ENCODE measurements at regions of chr12 and their contacts with region 1.

Region 1: GRCh38 chr12:6278439-6279255 is 31.8 kb upstream of the PLEKHG6 start:
- DNase-seq: peak; percentile 88 to 93
- ATAC-seq: peak; percentile 92 to 97 (median 95)
- H3K4me3 ChIP-seq: peak overlapping the region; percentile 71
- H3K27ac ChIP-seq: peak overlapping the region; percentile 90
- H3K4me1 ChIP-seq: peaks cover 13% of the 10 kb centered on the region
- H3K27me3 ChIP-seq: no peaks in the 10 kb centered on the region
- CTCF ChIP-seq: peak; percentile 99

Region 2: GRCh38 chr12:5988659-5989116 is 290.0 kb before region 1 on chr12:
- intact Hi-C with region 1: loop called (anchors 5 kb)
- DNase-seq: peak; percentile 76 to 84
- ATAC-seq: peak; percentile 85 to 96 (median 93)
- H3K4me3 ChIP-seq: no peak overlapping the region
- H3K27ac ChIP-seq: no peak overlapping the region
- H3K4me1 ChIP-seq: no peaks in the 10 kb centered on the region
- H3K27me3 ChIP-seq: no peaks in the 10 kb centered on the region
- CTCF ChIP-seq: peak; percentile 94

Region 3: DNA sequence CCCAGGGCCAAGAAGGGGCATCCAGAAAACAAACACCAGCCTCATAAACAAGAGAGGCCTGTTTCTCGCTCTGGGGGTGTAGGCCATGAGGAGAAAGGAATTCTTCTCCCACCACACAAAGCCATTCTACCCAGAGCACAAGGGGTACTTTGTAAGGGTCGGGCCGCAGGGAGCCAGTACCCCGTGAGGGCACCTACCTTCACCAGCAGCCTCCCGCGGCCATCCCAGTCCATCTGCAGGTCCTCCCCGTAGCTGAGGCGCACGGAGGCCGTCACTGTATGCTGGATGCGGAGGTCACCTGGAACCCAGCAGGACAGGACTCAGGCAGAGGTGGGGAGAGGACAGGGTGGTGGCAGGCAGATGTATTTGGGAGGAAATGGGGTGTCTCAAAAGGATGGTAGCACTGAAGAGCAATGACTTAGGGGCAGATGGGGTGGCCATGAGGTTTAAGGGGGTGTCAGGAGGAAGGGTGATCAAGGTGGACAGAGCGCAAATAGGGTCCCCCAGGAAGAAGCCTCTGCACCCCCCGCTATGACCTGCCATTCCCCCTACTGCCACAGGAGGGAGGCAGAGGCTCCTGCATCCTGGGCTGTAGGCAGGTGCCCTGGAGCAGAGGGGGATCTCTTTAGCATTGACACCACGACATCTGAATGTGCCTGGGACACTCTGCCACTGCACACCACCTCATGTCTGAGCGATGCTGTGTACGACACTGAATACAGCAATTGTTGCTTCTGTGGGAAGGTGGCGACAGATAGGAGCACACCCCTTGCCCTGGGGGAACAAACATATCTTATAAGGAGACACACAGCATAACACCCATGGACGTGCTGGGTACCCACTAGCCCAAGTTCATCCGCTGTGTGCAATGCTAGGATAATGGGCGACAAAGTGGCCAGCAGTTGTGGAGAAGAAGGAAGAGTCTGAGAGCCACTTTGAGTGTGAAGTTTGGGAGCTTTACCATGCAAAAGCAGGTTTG is 215.6 kb before region 1 on chr12:
- intact Hi-C with region 1: loop called (anchors 1 to 5 kb)
- DNase-seq: no peak
- ATAC-seq: peak; percentile 71 to 81 (median 80)
- H3K4me3 ChIP-seq: no peak overlapping the region
- H3K27ac ChIP-seq: no peak overlapping the region
- H3K4me1 ChIP-seq: no peaks in the 10 kb centered on the region
- H3K27me3 ChIP-seq: peaks cover 0 to 9% (median 2%) of the 10 kb centered on the region in 3 donors
- CTCF ChIP-seq: peak; percentile 72

Region 4: GRCh38 chr12:6195665-6196535 is 82.7 kb before region 1 on chr12:
- intact Hi-C with region 1: loop called (anchors 1 to 2 kb)
- DNase-seq: peak; percentile 83 to 90
- ATAC-seq: peak; percentile 86 to 93 (median 88)
- H3K4me3 ChIP-seq: no peak overlapping the region
- H3K27ac ChIP-seq: peak overlapping the region; percentile 41
- H3K4me1 ChIP-seq: peaks cover 11% of the 10 kb centered on the region
- H3K27me3 ChIP-seq: no peaks in the 10 kb centered on the region
- CTCF ChIP-seq: peak; percentile 96

Region 5: GRCh38 chr12:6230321-6231110 is 48.1 kb before region 1 on chr12:
- intact Hi-C with region 1: loop called (anchors 2 to 5 kb)
- DNase-seq: peak; percentile 54 to 77
- ATAC-seq: peak; percentile 28 to 53 (median 42)
- H3K4me3 ChIP-seq: peak overlapping the region; percentile 28
- H3K27ac ChIP-seq: peak overlapping the region; percentile 84
- H3K4me1 ChIP-seq: peaks cover 79% of the 10 kb centered on the region
- H3K27me3 ChIP-seq: no peaks in the 10 kb centered on the region
- CTCF ChIP-seq: no peak